Endothelial cell of umbilical vein (primary cell): ENCODE measurements at regions of chr1 and their contacts with region 1.

Region 1: DNA sequence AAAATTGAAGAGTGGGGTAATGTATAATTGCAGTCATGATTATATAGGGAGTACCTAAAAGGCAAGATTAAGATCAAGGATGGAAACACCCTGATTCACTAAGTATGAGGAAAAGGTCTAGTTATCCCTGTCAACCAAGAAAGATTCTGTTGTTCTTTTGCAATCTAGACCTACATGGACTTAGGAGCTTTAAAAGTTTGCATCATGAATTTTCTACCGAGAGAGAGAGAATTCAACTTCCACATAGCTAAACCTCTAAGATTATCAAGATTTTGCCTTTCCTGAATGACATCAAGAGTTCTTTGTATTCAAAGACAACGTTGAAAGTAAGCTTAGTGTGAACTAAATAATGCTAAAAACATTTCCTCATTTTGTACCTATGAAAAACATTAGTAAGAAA is 78.8 kb upstream of the RBM34 start:
- DNase-seq: no peak
- H3K4me3 ChIP-seq: no peak overlapping the region
- H3K27ac ChIP-seq: no peak overlapping the region
- H3K4me1 ChIP-seq: no peaks in the 10 kb centered on the region
- H3K27me3 ChIP-seq: no peaks in the 10 kb centered on the region
- CTCF ChIP-seq: no peak
- POLR2A ChIP-seq: no peak

Region 2: GRCh38 chr1:235253219-235253962 is 13.5 kb after region 1 on chr1:
- CTCF ChIA-PET with region 1: interaction called, 10 read pairs
- POLR2A ChIA-PET with region 1: interaction called, 8 read pairs
- dilution Hi-C with region 1: no loop called
- intact Hi-C with region 1: no loop called
- DNase-seq: peak; percentile 71
- H3K4me3 ChIP-seq: no peak overlapping the region
- H3K27ac ChIP-seq: no peak overlapping the region
- H3K4me1 ChIP-seq: no peaks in the 10 kb centered on the region
- H3K27me3 ChIP-seq: no peaks in the 10 kb centered on the region
- CTCF ChIP-seq: peak; percentile 74 to 81
- POLR2A ChIP-seq: no peak